ENCODE measurements at regions of chr20 and their contacts with region 1.

Region 1: GRCh38 chr20:63178889-63179686 is 36.8 kb downstream of the YTHDF1 start:
- DNase-seq: peak in 1 of 2 experiments; percentile 34
- H3K4me3 ChIP-seq: no peak overlapping the region
- H3K27ac ChIP-seq: no peak overlapping the region
- H3K4me1 ChIP-seq: no peaks in the 10 kb centered on the region
- H3K27me3 ChIP-seq: peaks cover 60% of the 10 kb centered on the region
- CTCF ChIP-seq: peak; percentile 65

Region 2: DNA sequence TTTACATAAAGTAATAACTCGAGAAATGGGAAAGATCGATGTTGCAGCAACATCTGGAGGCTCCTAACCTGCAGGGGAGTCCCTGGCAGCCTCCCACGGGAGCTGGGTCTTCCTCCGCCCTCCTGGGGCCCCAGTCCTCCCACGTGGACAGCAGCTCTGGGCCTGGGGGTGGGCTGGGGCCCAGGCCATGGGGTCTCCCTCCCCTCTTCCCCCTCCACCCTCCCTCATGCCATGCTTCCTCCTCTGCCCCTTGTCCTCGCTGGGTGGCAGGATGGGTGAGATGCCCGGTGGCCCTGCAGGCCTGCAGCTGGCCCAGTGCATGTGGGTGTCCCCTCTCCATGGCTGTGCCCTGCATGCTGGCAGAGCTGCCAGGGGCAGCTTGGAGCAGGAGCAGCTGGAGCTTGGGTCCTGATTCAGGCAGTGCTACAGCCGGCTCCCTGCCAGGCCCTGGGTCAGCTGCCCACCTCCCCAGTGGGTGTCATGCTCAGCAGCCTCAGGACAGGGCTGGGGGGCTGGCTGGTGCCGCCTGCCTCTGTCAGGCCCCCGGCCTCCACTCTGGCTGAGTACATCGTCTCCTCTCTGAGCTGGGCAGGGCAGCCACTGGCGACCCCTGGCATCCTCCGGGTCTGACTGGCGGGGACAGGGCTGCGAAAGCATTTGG is 123.4 kb before region 1 on chr20:
- CTCF ChIA-PET with region 1: no interaction called
- POLR2A ChIA-PET with region 1: no interaction called
- intact Hi-C with region 1: loop called (anchors 2 kb)
- DNase-seq: no peak
- H3K4me3 ChIP-seq: no peak overlapping the region
- H3K27ac ChIP-seq: no peak overlapping the region
- H3K4me1 ChIP-seq: no peaks in the 10 kb centered on the region
- H3K27me3 ChIP-seq: peaks cover 96% of the 10 kb centered on the region
- CTCF ChIP-seq: no peak

Region 3: GRCh38 chr20:63230800-63231268 is 51.7 kb after region 1 on chr20:
- CTCF ChIA-PET with region 1: no interaction called
- POLR2A ChIA-PET with region 1: no interaction called
- intact Hi-C with region 1: no loop called
- DNase-seq: no peak
- H3K4me3 ChIP-seq: no peak overlapping the region
- H3K27ac ChIP-seq: no peak overlapping the region
- H3K4me1 ChIP-seq: peaks cover 43% of the 10 kb centered on the region
- H3K27me3 ChIP-seq: no peaks in the 10 kb centered on the region
- CTCF ChIP-seq: no peak

Region 4: DNA sequence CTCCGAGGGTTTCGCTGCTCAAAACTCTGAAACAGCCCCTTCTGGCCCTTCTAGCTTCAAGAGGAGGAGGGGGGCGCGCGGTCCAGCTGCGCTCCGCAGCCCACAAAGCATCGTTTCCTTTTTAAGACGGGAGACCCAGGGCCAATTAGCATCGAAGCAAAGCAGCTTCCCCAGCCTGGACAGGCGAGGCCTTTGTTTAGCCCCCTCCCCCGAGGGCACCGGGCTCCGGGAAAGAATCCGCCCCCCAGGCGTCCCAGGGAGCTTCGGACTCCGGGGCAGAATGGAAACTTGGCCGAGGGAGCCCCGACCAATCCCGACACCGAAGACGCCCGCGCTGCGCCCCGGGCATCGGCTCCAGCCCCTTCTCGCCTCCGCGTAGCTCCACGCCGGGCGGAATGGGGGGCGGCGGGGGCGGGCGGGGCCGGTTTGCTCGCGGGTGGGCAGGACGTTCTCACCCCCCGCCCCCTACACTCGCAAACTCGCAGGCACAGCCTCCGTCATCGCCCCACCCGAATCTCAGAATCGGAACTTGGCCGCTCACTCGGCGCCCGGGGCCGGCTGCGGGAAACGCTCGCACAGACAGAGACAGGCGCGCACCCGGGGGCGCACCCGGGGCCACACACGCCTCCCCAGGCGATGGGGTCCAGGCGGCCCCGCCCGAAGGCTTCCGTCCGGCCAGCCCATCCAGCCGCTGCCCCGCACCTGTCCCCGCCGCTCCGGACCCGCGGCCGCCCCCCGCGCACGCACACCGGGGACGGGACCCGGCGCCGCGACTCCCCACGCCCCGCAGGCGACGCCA is 74.5 kb after region 1 on chr20:
- CTCF ChIA-PET with region 1: no interaction called
- POLR2A ChIA-PET with region 1: no interaction called
- intact Hi-C with region 1: loop called (anchors 1 kb)
- DNase-seq: no peak
- H3K4me3 ChIP-seq: no peak overlapping the region
- H3K27ac ChIP-seq: no peak overlapping the region
- H3K4me1 ChIP-seq: peaks cover 13% of the 10 kb centered on the region; the same call in 1 of the 2 replicates
- H3K27me3 ChIP-seq: peaks cover 60% of the 10 kb centered on the region
- CTCF ChIP-seq: no peak

Region 5: DNA sequence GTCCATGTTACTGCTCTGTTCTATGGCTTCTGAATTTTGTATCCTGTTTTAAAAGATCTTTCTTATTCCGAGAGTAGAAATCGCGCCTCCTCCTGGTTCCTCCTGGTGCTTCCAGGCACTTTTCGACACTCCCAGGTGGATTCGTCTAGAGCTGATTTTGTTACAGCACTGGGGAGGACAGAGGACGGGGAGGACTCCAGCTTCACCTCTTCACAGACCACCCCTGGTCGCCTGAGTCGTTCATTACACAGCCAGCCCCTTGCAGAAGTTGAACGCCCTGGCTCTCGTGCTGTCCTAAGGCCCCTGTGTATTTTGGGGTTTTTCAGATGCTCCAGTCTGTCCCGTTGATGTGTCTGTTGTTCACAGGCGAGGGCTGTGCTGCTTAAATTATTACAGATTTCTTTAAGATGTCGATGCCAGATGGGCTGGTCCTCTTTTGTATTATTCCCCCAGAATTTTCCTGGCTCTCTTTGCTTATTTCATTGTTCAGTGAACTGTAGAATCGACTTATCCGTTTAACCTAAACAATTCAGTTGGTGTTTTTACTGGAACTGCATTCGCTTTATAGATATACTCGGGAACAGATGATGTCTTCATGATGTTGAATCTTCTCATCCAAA is 144.4 kb after region 1 on chr20:
- CTCF ChIA-PET with region 1: no interaction called
- POLR2A ChIA-PET with region 1: no interaction called
- intact Hi-C with region 1: no loop called
- DNase-seq: no peak
- H3K4me3 ChIP-seq: no peak overlapping the region
- H3K27ac ChIP-seq: no peak overlapping the region
- H3K4me1 ChIP-seq: no peaks in the 10 kb centered on the region
- H3K27me3 ChIP-seq: peaks cover 73% of the 10 kb centered on the region
- CTCF ChIP-seq: peak; percentile 47; the same call in 1 of the 2 replicates

Region 6: DNA sequence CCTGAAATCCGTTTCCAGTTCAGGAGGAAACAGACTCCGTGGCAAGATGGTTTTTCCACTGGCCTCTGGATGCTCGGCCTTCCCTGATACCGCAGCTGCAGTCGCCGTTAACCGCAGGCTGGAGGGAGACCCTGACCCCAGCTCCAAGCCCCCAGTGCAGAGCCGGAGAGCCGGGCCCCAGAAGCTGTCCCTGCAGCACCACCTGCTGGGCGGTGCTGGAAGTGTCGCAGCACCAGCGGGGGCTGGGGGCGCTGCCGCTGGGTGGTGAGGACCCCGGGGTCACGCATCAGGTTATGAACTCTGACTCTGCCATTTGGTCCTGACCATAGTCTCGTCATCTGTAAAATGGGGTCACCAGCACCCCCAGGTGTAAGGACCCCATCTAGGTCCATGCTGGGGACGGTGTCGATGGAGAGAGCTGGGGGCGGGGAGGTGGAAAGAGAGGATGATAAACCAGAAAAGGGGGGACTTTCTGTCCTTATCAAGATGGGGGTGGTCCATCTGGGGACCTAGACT is 202.8 kb after region 1 on chr20:
- CTCF ChIA-PET with region 1: no interaction called
- POLR2A ChIA-PET with region 1: no interaction called
- intact Hi-C with region 1: loop called (anchors 2 kb)
- DNase-seq: peak in 1 of 2 experiments; percentile 34
- H3K4me3 ChIP-seq: no peak overlapping the region
- H3K27ac ChIP-seq: no peak overlapping the region
- H3K4me1 ChIP-seq: no peaks in the 10 kb centered on the region
- H3K27me3 ChIP-seq: peaks cover 97% of the 10 kb centered on the region
- CTCF ChIP-seq: peak; percentile 100

Measured in PC-9 (cell line).